BJ (cell line): ENCODE measurements at regions of chr14 and their contacts with region 1.

Region 1: GRCh38 chr14:94469261-94469660 is 6.7 kb downstream of the SERPINA9 start:
- DNase-seq: no peak
- H3K4me3 ChIP-seq: no peak overlapping the region
- H3K27me3 ChIP-seq: no peaks in the 10 kb centered on the region
- CTCF ChIP-seq: no peak

Region 2: DNA sequence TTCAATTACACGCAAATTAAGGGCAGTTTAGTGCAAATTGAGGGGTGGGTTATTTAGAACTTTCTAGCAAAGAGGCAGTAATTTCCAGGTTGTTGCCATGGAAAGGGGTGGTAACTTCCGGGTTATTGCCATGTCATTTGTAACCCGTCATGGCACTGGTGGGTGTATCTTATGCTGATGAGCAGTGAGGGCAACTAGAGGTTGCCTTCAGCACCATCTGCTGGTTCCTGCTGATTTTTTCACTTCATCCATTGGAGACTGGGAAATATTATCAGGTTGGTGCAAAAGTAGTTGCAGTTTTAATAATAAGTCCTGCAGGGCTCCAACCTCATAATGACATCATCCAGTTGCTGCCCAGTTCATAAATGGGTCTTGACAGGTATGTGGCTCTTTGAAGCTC is 67.6 kb after region 1 on chr14:
- CTCF ChIA-PET with region 1: no interaction called
- POLR2A ChIA-PET with region 1: interaction called, 19 read pairs
- DNase-seq: no peak
- H3K4me3 ChIP-seq: no peak overlapping the region
- H3K27me3 ChIP-seq: no peaks in the 10 kb centered on the region
- CTCF ChIP-seq: no peak

Region 3: DNA sequence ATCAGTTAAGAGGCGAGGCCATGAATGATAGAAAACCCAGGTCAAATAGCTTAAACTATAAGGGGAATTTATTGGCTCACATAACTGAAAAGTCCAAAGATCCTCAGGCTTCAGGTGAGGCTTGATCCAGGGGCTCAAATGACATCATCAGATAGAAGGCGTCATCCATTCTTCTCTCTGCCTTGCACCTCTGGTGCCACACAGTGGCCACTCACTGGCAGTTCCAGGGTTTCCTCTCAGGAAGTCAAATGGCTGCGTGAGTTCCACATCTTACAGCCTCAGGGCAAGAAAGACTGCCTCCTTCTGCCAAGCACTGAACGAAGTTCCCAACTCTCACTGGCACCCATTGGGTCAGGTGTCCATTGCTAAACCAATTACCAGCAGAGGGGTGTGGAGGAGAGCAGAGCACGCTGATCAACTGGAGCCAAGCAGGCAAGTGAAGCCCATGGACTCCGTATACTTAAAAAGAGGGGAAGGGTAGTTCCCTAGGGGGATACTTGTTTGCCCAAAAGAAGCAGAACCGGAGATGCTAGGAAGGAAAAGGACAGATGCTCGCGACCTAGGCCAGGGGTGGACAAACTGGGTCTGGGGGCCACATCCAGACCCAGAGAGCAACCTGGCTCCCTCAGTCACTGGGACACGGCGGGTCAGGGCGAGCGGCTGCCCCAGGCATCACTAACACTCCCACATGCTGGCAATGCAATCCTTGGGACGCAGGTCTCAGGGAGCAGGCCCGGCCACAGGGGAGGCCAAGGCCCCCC is 212.2 kb after region 1 on chr14:
- CTCF ChIA-PET with region 1: no interaction called
- POLR2A ChIA-PET with region 1: no interaction called
- DNase-seq: no peak
- H3K4me3 ChIP-seq: no peak overlapping the region
- H3K27me3 ChIP-seq: no peaks in the 10 kb centered on the region
- CTCF ChIP-seq: peak; percentile 57